ENCODE measurements at regions of chr17 and their contacts with region 1.

Region 1: DNA sequence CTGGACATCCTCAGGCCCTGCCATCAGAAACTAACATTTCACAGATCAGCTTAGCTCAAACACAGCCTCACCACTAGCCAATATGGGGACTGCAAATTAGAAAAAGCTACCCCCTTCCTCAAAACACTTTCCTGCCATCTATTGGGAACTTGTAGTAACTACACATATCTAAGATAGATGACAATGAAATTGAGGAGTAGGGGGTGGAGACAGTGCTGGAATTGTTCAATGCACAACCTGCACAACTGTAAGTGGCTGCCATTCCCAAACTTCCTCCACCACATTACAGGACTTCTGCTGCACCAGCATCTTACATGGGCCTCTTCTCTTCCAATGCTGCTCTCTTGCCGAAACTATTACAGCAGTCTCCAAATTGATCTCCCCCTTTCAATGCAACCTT is 21.9 kb downstream of the AIPL1 start:
- DNase-seq: no peak
- ATAC-seq: no peak

Region 2: DNA sequence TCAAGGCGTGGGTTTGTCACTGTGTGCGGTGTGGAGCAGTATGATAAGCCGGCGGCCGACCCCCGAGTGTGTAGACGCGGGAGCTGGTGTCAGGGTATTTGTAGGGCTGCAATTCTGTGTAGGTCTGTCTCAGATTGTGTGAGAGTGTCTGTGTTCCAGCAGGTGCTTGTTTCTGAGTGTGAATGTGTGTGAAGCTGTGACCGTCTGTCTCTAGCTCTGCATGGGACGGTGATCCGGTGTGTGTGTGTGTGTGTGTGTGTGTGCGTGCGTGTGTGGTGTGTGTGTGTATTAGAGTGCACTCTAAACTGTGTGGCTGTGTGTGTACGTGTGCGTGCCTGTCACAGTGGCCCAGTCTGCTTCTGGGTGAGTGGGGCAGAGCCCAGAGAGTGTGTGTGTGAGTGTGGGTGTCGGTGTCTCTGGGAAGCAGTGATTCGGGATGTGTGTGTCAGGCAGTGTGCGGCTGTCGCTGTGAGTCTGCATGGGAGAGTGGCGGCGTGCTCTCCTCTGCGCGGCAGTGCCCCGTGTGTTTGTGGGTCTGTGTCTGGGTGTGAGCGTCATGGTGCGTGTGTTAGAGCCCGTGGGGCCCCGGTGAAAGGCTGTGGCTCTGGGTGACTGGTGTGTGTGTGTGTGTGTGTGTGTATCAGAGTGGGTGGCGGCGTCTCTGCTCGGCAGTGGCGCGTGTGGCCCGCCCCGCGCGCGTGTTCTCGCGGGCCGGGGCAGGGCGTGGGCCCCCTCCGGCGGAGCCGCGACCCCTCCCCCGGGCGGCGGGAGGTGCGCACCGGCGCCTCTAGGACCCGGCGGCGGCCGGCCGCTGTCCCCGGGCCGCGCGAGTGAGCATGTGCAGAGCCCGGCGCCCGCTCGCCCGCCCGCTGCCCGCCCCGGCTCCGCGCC is 343.3 kb before region 1 on chr17 and contains the start of gene WSCD1:
- intact Hi-C with region 1: loop called in 1 of 2 experiments (anchors 10 kb)
- DNase-seq: peak; percentile 50
- ATAC-seq: peak; percentile 67 to 84
- total RNA-seq, gene WSCD1: 2.6 to 10.1 TPM

Measured in left cardiac atrium (tissue), 4 donors.